ENCODE measurements at regions of chr9 and their contacts with region 1.

Region 1: GRCh38 chr9:38035873-38036272 is 33.2 kb downstream of the SHB start:
- DNase-seq: no peak
- ATAC-seq: no peak
- H3K4me3 ChIP-seq: no peak overlapping the region
- H3K4me3 Mint-ChIP-seq: no peak overlapping the region
- H3K27ac ChIP-seq: no peak overlapping the region
- H3K27ac Mint-ChIP-seq: no peak overlapping the region
- H3K4me1 ChIP-seq: no peaks in the 10 kb centered on the region
- H3K4me1 Mint-ChIP-seq: no peaks in the 10 kb centered on the region
- H3K27me3 ChIP-seq: no peaks in the 10 kb centered on the region
- H3K27me3 Mint-ChIP-seq: no peaks in the 10 kb centered on the region
- CTCF ChIP-seq: no peak

Region 2: GRCh38 chr9:38178237-38178636 is 142.4 kb after region 1 on chr9:
- CTCF ChIA-PET with region 1: no interaction called
- POLR2A ChIA-PET with region 1: no interaction called
- intact Hi-C with region 1: loop called in 1 of 2 experiments (anchors 10 kb)
- DNase-seq: no peak
- ATAC-seq: no peak
- H3K4me3 ChIP-seq: no peak overlapping the region
- H3K4me3 Mint-ChIP-seq: no peak overlapping the region
- H3K27ac ChIP-seq: no peak overlapping the region
- H3K27ac Mint-ChIP-seq: no peak overlapping the region
- H3K4me1 ChIP-seq: no peaks in the 10 kb centered on the region
- H3K4me1 Mint-ChIP-seq: no peaks in the 10 kb centered on the region
- H3K27me3 ChIP-seq: no peaks in the 10 kb centered on the region
- H3K27me3 Mint-ChIP-seq: peaks cover 5% of the 10 kb centered on the region
- CTCF ChIP-seq: no peak